ENCODE measurements at regions of chr6 and their contacts with region 1.

Region 1: DNA sequence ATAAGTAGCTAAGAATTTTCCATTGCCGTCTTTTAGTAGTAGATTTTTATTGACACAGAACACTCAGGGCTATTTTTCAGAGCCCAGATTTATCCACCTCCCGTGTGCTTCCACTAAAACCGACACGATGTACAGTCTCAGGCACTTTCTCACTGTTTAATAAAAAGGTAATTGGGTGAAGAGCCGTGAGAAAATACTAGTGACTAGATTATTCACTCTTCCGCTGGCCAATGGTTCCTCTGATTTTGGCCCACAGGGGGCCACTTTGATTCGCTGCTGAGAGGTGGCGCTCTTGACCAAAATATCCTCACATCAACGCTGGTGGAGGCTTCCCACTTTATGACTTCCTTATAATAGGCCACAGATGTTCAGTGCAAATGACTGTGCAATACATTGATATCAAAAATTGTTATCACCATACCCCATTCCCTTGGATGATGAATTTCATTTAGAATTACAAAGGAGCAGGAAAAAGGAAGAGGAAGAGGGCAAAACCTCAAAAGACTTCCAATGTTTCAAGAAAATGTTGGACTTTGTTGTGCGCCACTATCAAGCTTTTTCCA is 12.3 kb upstream of the HDDC2 start:
- DNase-seq: peak; percentile 78
- H3K4me3 ChIP-seq: no peak overlapping the region
- H3K27ac ChIP-seq: no peak overlapping the region
- H3K4me1 ChIP-seq: no peaks in the 10 kb centered on the region
- H3K27me3 ChIP-seq: no peaks in the 10 kb centered on the region
- CTCF ChIP-seq: peak; percentile 67 to 81 (median 72)
- EP300 ChIP-seq: no peak
- POLR2A ChIP-seq: no peak

Region 2: DNA sequence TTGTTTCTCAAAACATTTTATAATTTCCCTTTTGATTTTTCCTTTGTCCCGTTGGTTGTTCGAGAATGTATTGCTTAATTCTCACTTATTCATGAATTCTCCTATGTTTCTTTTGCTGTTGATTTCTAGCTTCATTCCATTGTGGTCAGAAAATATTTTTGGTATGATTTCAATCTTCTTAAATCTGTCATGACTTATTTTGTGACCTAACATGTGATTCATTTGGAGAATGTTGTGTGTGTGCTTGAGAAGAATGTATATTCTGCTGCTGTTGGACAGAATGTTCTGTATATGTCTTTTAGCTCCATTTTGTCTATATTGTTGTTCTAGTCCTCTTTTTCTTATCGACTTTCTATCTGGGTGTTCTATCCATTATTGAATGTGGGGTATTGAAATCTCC is 638.1 kb before region 1 on chr6:
- intact Hi-C with region 1: no loop called
- DNase-seq: no peak
- H3K4me3 ChIP-seq: no peak overlapping the region
- H3K27ac ChIP-seq: no peak overlapping the region
- H3K4me1 ChIP-seq: no peaks in the 10 kb centered on the region
- H3K27me3 ChIP-seq: no peaks in the 10 kb centered on the region
- CTCF ChIP-seq: no peak
- EP300 ChIP-seq: no peak
- POLR2A ChIP-seq: no peak

Region 3: GRCh38 chr6:125001684-125002405 is 312.3 kb before region 1 on chr6:
- intact Hi-C with region 1: no loop called
- DNase-seq: no peak
- H3K4me3 ChIP-seq: peak overlapping the region in 2 of 4 donors; percentile 7
- H3K27ac ChIP-seq: peak overlapping the region in 3 of 4 donors; percentile 12 to 63 (median 50)
- H3K4me1 ChIP-seq: peaks cover 0 to 45% (median 30%) of the 10 kb centered on the region in 4 donors
- H3K27me3 ChIP-seq: no peaks in the 10 kb centered on the region
- CTCF ChIP-seq: no peak
- EP300 ChIP-seq: no peak
- POLR2A ChIP-seq: no peak

Region 4: GRCh38 chr6:125363039-125363823 is 49.1 kb after region 1 on chr6:
- intact Hi-C with region 1: loop called (anchors 5 kb)
- DNase-seq: peak; percentile 82
- H3K4me3 ChIP-seq: peak overlapping the region; percentile 40 to 56 (median 49)
- H3K27ac ChIP-seq: peak overlapping the region; percentile 57 to 87 (median 76)
- H3K4me1 ChIP-seq: peaks cover 0 to 33% (median 19%) of the 10 kb centered on the region in 4 donors
- H3K27me3 ChIP-seq: no peaks in the 10 kb centered on the region
- CTCF ChIP-seq: no peak
- EP300 ChIP-seq: no peak
- POLR2A ChIP-seq: no peak

Region 5: GRCh38 chr6:125451750-125452149 is 137.7 kb after region 1 on chr6:
- intact Hi-C with region 1: no loop called
- DNase-seq: no peak
- H3K4me3 ChIP-seq: no peak overlapping the region
- H3K27ac ChIP-seq: no peak overlapping the region
- H3K4me1 ChIP-seq: no peaks in the 10 kb centered on the region
- H3K27me3 ChIP-seq: no peaks in the 10 kb centered on the region
- CTCF ChIP-seq: no peak
- EP300 ChIP-seq: no peak
- POLR2A ChIP-seq: no peak

Region 6: GRCh38 chr6:125749173-125749864 is 435.2 kb after region 1 on chr6 and contains the start of gene HEY2:
- intact Hi-C with region 1: loop called (anchors 2 kb)
- DNase-seq: peak; percentile 96
- H3K4me3 ChIP-seq: peak within 1 kb of the TSS; percentile 53 to 74 (median 70)
- H3K27ac ChIP-seq: peak within 1 kb of the TSS; percentile 86 to 89 (median 88)
- H3K4me1 ChIP-seq: peaks cover 0 to 33% (median 21%) of the 10 kb centered on the region in 4 donors
- H3K27me3 ChIP-seq: peaks cover 0 to 44% (median 0%) of the 10 kb centered on the region in 3 donors
- CTCF ChIP-seq: peak in 1 of 4 experiments; percentile 28
- EP300 ChIP-seq: peak in 1 of 4 donors; percentile 40
- POLR2A ChIP-seq: peak in 1 of 2 donors; percentile 17
- total RNA-seq, gene HEY2: 1.3 to 3.9 (median 2.1) TPM

Region 7: GRCh38 chr6:125769147-125769783 is 455.2 kb after region 1 on chr6:
- intact Hi-C with region 1: loop called (anchors 1 kb)
- DNase-seq: no peak
- H3K4me3 ChIP-seq: no peak overlapping the region
- H3K27ac ChIP-seq: no peak overlapping the region
- H3K4me1 ChIP-seq: no peaks in the 10 kb centered on the region
- H3K27me3 ChIP-seq: no peaks in the 10 kb centered on the region
- CTCF ChIP-seq: no peak
- EP300 ChIP-seq: no peak
- POLR2A ChIP-seq: no peak

Region 8: GRCh38 chr6:125956506-125957390 is 642.6 kb after region 1 on chr6 and contains the start of gene HINT3:
- intact Hi-C with region 1: loop called (anchors 5 kb)
- DNase-seq: peak; percentile 98
- H3K4me3 ChIP-seq: peak within 1 kb of the TSS; percentile 65 to 89 (median 82)
- H3K27ac ChIP-seq: peak within 1 kb of the TSS; percentile 89 to 95 (median 92)
- H3K4me1 ChIP-seq: peaks cover 0 to 30% (median 17%) of the 10 kb centered on the region in 4 donors
- H3K27me3 ChIP-seq: no peaks in the 10 kb centered on the region
- CTCF ChIP-seq: peak; percentile 95 to 98 (median 96)
- EP300 ChIP-seq: peak in 1 of 4 donors; percentile 57
- POLR2A ChIP-seq: peak; percentile 49 to 54
- total RNA-seq, gene HINT3: 41.4 to 49.6 (median 48.3) TPM

Measured in sigmoid colon (tissue), 7 donors.